ENCODE measurements at regions of chr2 and their contacts with region 1.

Region 1: GRCh38 chr2:110903548-110903947 is 171.2 kb downstream of the ACOXL start:
- DNase-seq: no peak
- H3K4me3 ChIP-seq: no peak overlapping the region
- H3K27ac ChIP-seq: no peak overlapping the region
- H3K4me1 ChIP-seq: no peaks in the 10 kb centered on the region
- H3K27me3 ChIP-seq: no peaks in the 10 kb centered on the region
- CTCF ChIP-seq: no peak

Region 2: GRCh38 chr2:110720547-110720946 is 183.0 kb before region 1 on chr2:
- CTCF ChIA-PET with region 1: no interaction called
- POLR2A ChIA-PET with region 1: no interaction called
- intact Hi-C with region 1: no loop called
- DNase-seq: no peak
- H3K4me3 ChIP-seq: no peak overlapping the region
- H3K27ac ChIP-seq: no peak overlapping the region
- H3K4me1 ChIP-seq: 0 out of 2 replicates have a peak, but pooled peaks cover 10% of the 10 kb centered on the region
- H3K27me3 ChIP-seq: no peaks in the 10 kb centered on the region
- CTCF ChIP-seq: no peak

Region 3: GRCh38 chr2:110948027-110948674 is 44.6 kb after region 1 on chr2:
- CTCF ChIA-PET with region 1: no interaction called
- POLR2A ChIA-PET with region 1: no interaction called
- intact Hi-C with region 1: no loop called
- DNase-seq: no peak
- H3K4me3 ChIP-seq: no peak overlapping the region
- H3K27ac ChIP-seq: no peak overlapping the region
- H3K4me1 ChIP-seq: no peaks in the 10 kb centered on the region
- H3K27me3 ChIP-seq: no peaks in the 10 kb centered on the region
- CTCF ChIP-seq: no peak

Region 4: DNA sequence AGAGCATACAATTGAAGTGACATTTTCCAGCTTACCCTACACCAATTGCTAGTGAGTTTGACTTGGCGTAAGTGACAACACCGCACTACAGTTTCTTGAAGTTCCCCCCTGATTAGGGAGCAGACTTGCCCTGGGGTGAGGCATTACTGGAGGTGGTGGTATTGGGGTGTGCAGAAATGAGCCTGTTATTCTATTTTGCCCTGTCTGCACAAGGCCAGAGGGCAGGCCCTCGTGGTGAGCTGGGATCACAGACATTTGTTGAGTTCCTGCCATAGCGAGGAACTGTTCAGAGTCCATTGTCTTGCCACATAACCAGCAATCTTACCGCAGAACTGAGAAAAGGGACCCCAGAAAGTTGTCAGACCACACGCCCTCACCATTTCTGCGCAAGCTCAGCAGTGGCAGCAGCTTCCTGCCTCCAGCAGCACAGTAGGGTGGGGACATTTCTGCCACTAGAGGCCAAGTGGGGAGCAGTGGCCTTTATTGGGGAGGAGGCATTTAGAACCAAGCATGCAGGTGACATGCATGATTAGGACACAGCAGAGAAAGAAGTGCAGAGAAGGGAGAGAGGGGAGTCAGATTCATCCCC is 113.6 kb after region 1 on chr2:
- CTCF ChIA-PET with region 1: interaction called, 16 read pairs
- POLR2A ChIA-PET with region 1: no interaction called
- intact Hi-C with region 1: no loop called
- DNase-seq: no peak
- H3K4me3 ChIP-seq: no peak overlapping the region
- H3K27ac ChIP-seq: no peak overlapping the region
- H3K4me1 ChIP-seq: no peaks in the 10 kb centered on the region
- H3K27me3 ChIP-seq: no peaks in the 10 kb centered on the region
- CTCF ChIP-seq: no peak

Region 5: GRCh38 chr2:111032721-111033429 is 129.3 kb after region 1 on chr2:
- CTCF ChIA-PET with region 1: no interaction called
- POLR2A ChIA-PET with region 1: interaction called, 10 read pairs
- intact Hi-C with region 1: no loop called
- DNase-seq: peak; percentile 69 to 88
- H3K4me3 ChIP-seq: peak overlapping the region; percentile 24; the same call in 1 of the 2 replicates
- H3K27ac ChIP-seq: peak overlapping the region; percentile 94
- H3K4me1 ChIP-seq: peaks cover 41% of the 10 kb centered on the region
- H3K27me3 ChIP-seq: no peaks in the 10 kb centered on the region
- CTCF ChIP-seq: no peak; the same call in 1 of the 2 replicates

Measured in PC-9 (cell line).